ENCODE measurements at regions of chr15 and their contacts with region 1.

Region 1: GRCh38 chr15:79380755-79381497 is 51.2 kb upstream of the MINAR1 start:
- DNase-seq: peak; percentile 87 to 93
- H3K4me3 ChIP-seq: no peak overlapping the region
- H3K4me1 ChIP-seq: peaks cover 7% of the 10 kb centered on the region
- H3K27me3 ChIP-seq: no peaks in the 10 kb centered on the region

Region 2: GRCh38 chr15:79596051-79596507 is 215.2 kb after region 1 on chr15:
- in situ Hi-C with region 1: loop called (anchors 5 kb)
- DNase-seq: peak; percentile 91 to 93
- H3K4me3 ChIP-seq: no peak overlapping the region
- H3K4me1 ChIP-seq: 0 out of 2 replicates have a peak, but pooled peaks cover 2% of the 10 kb centered on the region
- H3K27me3 ChIP-seq: no peaks in the 10 kb centered on the region; the same call in 1 of the 2 replicates

Region 3: GRCh38 chr15:79989682-79990081 is 608.8 kb after region 1 on chr15:
- in situ Hi-C with region 1: loop called (anchors 10 kb)
- DNase-seq: no peak
- H3K4me3 ChIP-seq: no peak overlapping the region
- H3K4me1 ChIP-seq: no peaks in the 10 kb centered on the region
- H3K27me3 ChIP-seq: no peaks in the 10 kb centered on the region; the same call in 1 of the 2 replicates